PC-3 (cell line): ENCODE measurements at regions of chr2 and their contacts with region 1.

Region 1: GRCh38 chr2:240434728-240435456 is 571 bp upstream of the GPC1 start:
- DNase-seq: peak; percentile 88
- ATAC-seq: peak; percentile 35
- H3K4me3 ChIP-seq: peak overlapping the region; percentile 95
- H3K27ac ChIP-seq: peak overlapping the region; percentile 97
- H3K4me1 ChIP-seq: peaks cover 30% of the 10 kb centered on the region
- H3K27me3 ChIP-seq: no peaks in the 10 kb centered on the region
- CTCF ChIP-seq: no peak

Region 2: GRCh38 chr2:240149943-240150784 is 284.7 kb before region 1 on chr2:
- CTCF ChIA-PET with region 1: no interaction called
- POLR2A ChIA-PET with region 1: no interaction called
- intact Hi-C with region 1: loop called (anchors 2 kb)
- DNase-seq: peak; percentile 55
- ATAC-seq: peak; percentile 71
- H3K4me3 ChIP-seq: no peak overlapping the region
- H3K27ac ChIP-seq: no peak overlapping the region
- H3K4me1 ChIP-seq: no peaks in the 10 kb centered on the region
- H3K27me3 ChIP-seq: peaks cover 23% of the 10 kb centered on the region
- CTCF ChIP-seq: peak; percentile 85

Region 3: GRCh38 chr2:240232961-240233893 is 201.7 kb before region 1 on chr2:
- CTCF ChIA-PET with region 1: no interaction called
- POLR2A ChIA-PET with region 1: interaction called, 11 read pairs
- intact Hi-C with region 1: loop called (anchors 1 kb)
- DNase-seq: peak; percentile 84
- ATAC-seq: peak; percentile 87
- H3K4me3 ChIP-seq: peak overlapping the region; percentile 68
- H3K27ac ChIP-seq: no peak overlapping the region
- H3K4me1 ChIP-seq: peaks cover 12% of the 10 kb centered on the region
- H3K27me3 ChIP-seq: no peaks in the 10 kb centered on the region
- CTCF ChIP-seq: peak; percentile 83

Region 4: GRCh38 chr2:240369801-240370585 is 64.9 kb before region 1 on chr2:
- CTCF ChIA-PET with region 1: no interaction called
- POLR2A ChIA-PET with region 1: interaction called, 11 read pairs
- intact Hi-C with region 1: loop called (anchors 1 kb)
- DNase-seq: peak; percentile 90
- ATAC-seq: peak; percentile 93
- H3K4me3 ChIP-seq: peak overlapping the region; percentile 37; the same call in 1 of the 2 replicates
- H3K27ac ChIP-seq: peak overlapping the region; percentile 95
- H3K4me1 ChIP-seq: peaks cover 30% of the 10 kb centered on the region
- H3K27me3 ChIP-seq: no peaks in the 10 kb centered on the region
- CTCF ChIP-seq: 0 out of 2 replicates have a peak, but pooled peaks have one; percentile 8

Region 5: DNA sequence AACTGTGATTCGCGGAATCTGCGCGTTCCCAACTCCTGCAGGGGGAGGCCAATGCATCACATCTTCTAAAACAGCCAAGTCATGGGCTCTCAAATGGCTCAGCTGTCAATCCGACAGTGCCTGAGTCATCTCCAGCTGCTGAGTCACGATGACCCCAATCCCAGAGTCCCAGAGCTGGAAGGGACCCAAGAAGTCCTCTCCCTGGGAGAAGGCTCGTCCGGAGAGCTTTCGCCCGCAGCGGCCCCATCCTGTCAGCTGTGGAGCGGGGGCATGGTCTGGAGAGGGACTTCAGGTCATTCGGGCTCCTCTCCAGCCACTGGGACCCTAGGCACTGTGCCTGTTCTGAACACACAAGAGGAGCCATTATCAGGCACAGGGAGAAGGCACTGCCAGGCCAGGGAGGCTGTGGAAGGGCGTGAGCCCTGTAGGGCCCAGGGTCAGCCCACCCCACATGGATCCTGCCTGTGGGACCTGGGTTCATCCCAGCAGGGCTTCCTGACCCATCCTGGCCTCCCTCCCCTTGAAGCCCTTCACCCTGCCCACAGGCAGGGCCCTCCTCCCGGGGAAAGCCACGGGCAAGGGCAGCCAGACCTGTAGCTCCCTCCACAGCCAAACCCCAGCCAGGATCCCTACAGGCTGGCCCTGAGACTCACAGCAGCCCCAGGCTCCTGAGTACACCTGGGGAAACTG is 47.1 kb before region 1 on chr2:
- CTCF ChIA-PET with region 1: no interaction called
- POLR2A ChIA-PET with region 1: interaction called, 10 read pairs
- intact Hi-C with region 1: loop called (anchors 2 kb)
- DNase-seq: peak; percentile 96
- ATAC-seq: peak; percentile 70
- H3K4me3 ChIP-seq: peak overlapping the region; percentile 59
- H3K27ac ChIP-seq: peak overlapping the region; percentile 74
- H3K4me1 ChIP-seq: peaks cover 13% of the 10 kb centered on the region
- H3K27me3 ChIP-seq: no peaks in the 10 kb centered on the region
- CTCF ChIP-seq: no peak; the same call in 1 of the 2 replicates

Region 6: GRCh38 chr2:240480834-240481623 is 46.1 kb after region 1 on chr2:
- CTCF ChIA-PET with region 1: no interaction called
- POLR2A ChIA-PET with region 1: no interaction called
- intact Hi-C with region 1: no loop called
- DNase-seq: no peak
- ATAC-seq: no peak
- H3K4me3 ChIP-seq: no peak overlapping the region
- H3K27ac ChIP-seq: no peak overlapping the region
- H3K4me1 ChIP-seq: no peaks in the 10 kb centered on the region
- H3K27me3 ChIP-seq: no peaks in the 10 kb centered on the region
- CTCF ChIP-seq: no peak